ENCODE measurements at regions of chr12 and their contacts with region 1.

Region 1: GRCh38 chr12:93603762-93604161 is 31.3 kb downstream of the SOCS2 start:
- DNase-seq: no peak
- H3K4me3 ChIP-seq: no peak overlapping the region
- H3K27ac ChIP-seq: no peak overlapping the region
- H3K4me1 ChIP-seq: no peaks in the 10 kb centered on the region
- H3K27me3 ChIP-seq: no peaks in the 10 kb centered on the region
- CTCF ChIP-seq: no peak
- POLR2A ChIP-seq: no peak

Region 2: GRCh38 chr12:91704446-91704845 is 1899.3 kb before region 1 on chr12:
- intact Hi-C with region 1: no loop called
- DNase-seq: no peak
- H3K4me3 ChIP-seq: no peak overlapping the region
- H3K27ac ChIP-seq: no peak overlapping the region
- H3K4me1 ChIP-seq: no peaks in the 10 kb centered on the region
- H3K27me3 ChIP-seq: no peaks in the 10 kb centered on the region
- CTCF ChIP-seq: no peak
- POLR2A ChIP-seq: no peak

Region 3: DNA sequence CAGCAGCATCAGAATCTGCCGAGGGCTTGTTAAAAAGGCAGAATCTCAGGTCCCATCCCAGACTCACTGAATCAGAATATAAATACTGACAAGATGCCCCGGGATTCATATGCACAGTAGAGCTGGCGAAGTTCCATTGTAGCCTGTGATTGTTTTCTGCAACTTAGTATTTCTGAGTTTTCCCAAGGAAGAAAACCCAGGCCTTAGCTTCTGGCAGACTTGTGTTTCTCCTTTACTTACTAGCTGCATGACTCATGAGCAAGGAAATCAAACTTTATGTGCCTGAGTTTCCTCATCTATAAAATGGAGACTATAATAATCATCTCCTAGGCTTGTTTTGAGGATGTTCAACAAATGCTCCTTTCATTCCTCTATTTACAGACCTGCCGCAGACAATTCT is 1179.4 kb before region 1 on chr12:
- intact Hi-C with region 1: loop called (anchors 10 kb)
- DNase-seq: no peak
- H3K4me3 ChIP-seq: no peak overlapping the region
- H3K27ac ChIP-seq: no peak overlapping the region
- H3K4me1 ChIP-seq: no peaks in the 10 kb centered on the region
- H3K27me3 ChIP-seq: no peaks in the 10 kb centered on the region
- CTCF ChIP-seq: no peak
- POLR2A ChIP-seq: no peak

Measured in breast epithelium (tissue), 4 donors.